ENCODE measurements at regions of chr10 and their contacts with region 1.

Region 1: GRCh38 chr10:72337020-72337629 is 17.6 kb downstream of the DNAJB12 start:
- DNase-seq: peak; percentile 49 to 63
- ATAC-seq: peak; percentile 56 to 75; a peak in 5 of 6 replicates
- H3K4me3 ChIP-seq: no peak overlapping the region
- H3K27ac ChIP-seq: peak overlapping the region; percentile 78 to 80
- H3K4me1 ChIP-seq: peaks cover 48% of the 10 kb centered on the region
- CTCF ChIP-seq: peak; percentile 96
- EP300 ChIP-seq: no peak
- POLR2A ChIP-seq: no peak
- RAD21 ChIP-seq: peak; percentile 94 to 95

Region 2: GRCh38 chr10:72133517-72133916 is 203.6 kb before region 1 on chr10:
- CTCF ChIA-PET with region 1: interaction called, 44 read pairs
- POLR2A ChIA-PET with region 1: no interaction called
- DNase-seq: no peak
- ATAC-seq: peak in 1 of 2 experiments; percentile 44; a peak in 3 of 6 replicates
- H3K4me3 ChIP-seq: no peak overlapping the region
- H3K27ac ChIP-seq: peak overlapping the region; percentile 10 to 56; a peak in 3 of 6 replicates
- H3K4me1 ChIP-seq: peaks cover 23% of the 10 kb centered on the region
- CTCF ChIP-seq: no peak
- EP300 ChIP-seq: no peak
- POLR2A ChIP-seq: no peak
- RAD21 ChIP-seq: no peak

Region 3: DNA sequence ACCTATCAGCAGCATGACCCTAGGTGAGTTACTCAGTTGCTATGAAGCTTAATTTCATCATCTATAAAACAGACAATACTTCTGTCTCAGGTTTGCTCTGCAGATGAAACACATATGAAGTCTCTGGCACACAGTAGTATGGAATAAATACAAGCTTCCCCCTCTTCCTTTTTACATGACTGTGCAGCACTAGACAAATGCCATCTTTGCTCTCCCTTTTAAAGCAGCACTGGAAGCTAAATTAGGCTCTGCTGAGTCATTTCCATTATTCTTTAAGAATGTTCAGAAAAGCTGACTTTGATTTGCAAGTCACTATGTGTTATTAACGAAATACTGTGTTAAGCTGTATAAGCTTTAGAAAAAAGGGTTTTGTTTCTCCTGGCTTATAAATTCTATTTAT is 162.0 kb before region 1 on chr10:
- CTCF ChIA-PET with region 1: no interaction called
- POLR2A ChIA-PET with region 1: no interaction called
- DNase-seq: peak in 1 of 2 experiments; percentile 25
- ATAC-seq: no peak
- H3K4me3 ChIP-seq: no peak overlapping the region
- H3K27ac ChIP-seq: peak overlapping the region; percentile 77 to 85
- H3K4me1 ChIP-seq: peaks cover 62% of the 10 kb centered on the region
- CTCF ChIP-seq: no peak
- EP300 ChIP-seq: no peak
- POLR2A ChIP-seq: no peak
- RAD21 ChIP-seq: no peak

Region 4: DNA sequence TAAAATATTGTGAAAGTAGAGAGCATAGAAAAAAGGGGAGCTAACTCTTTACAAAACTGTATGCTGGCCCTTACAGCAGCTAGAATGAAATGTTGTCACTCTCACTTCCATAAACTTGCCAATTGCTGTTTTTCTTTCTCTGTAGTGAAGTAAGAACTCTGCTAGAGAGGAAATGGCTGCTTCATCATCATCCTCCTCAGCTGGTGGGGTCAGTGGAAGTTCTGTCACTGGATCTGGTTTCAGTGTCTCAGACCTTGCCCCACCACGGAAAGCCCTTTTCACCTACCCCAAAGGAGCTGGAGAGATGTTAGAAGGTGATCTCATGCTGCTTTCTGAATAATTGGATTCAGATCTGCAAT is 113.4 kb before region 1 on chr10:
- CTCF ChIA-PET with region 1: interaction called, 10 read pairs
- POLR2A ChIA-PET with region 1: interaction called, 6 read pairs
- DNase-seq: no peak
- ATAC-seq: no peak
- H3K4me3 ChIP-seq: no peak overlapping the region
- H3K27ac ChIP-seq: peak overlapping the region; percentile 66 to 82
- H3K4me1 ChIP-seq: peaks cover 38% of the 10 kb centered on the region
- CTCF ChIP-seq: no peak
- EP300 ChIP-seq: no peak
- POLR2A ChIP-seq: no peak
- RAD21 ChIP-seq: no peak

Region 5: DNA sequence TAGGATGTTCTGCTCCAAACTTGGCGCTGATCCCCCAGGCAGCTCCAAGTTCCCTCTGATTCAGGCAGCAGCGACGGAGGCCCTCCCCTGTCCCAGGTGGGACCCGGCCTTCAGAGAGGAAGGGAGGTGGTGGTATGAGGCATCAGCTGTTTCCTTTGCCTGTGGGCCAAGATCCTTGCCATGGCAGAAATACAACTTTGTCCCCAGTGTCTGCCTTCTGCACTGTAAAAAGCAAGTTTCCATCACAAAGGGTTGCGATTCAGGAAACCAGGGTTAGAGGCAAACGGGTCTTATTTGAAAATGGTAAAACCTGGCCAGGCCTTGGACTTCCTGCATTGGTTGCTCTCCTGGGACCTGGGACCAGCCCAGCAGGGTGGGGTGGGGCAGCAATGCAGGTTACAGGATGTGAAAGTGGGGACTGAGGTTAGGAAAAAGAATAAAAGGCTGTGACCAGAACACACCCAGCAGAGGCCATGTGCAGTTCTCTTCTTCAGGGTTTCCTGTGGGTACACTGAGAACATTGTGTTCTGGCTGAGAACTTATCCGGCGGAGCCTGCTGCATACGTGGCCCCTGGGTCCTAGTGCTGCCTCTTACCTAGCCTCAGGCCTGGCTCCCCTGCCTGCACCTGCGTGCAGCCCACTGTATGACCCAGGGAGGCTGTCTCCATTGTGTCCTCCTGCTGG is 88.5 kb before region 1 on chr10:
- CTCF ChIA-PET with region 1: interaction called, 13 read pairs
- POLR2A ChIA-PET with region 1: no interaction called
- DNase-seq: peak in 1 of 2 experiments; percentile 60
- ATAC-seq: peak; percentile 25 to 51; a peak in 4 of 6 replicates
- H3K4me3 ChIP-seq: peak overlapping the region; percentile 9; the same call in 2 of the 3 replicates
- H3K27ac ChIP-seq: peak overlapping the region; percentile 99 to 100
- H3K4me1 ChIP-seq: peaks cover 67% of the 10 kb centered on the region
- CTCF ChIP-seq: no peak
- EP300 ChIP-seq: no peak
- POLR2A ChIP-seq: peak; percentile 22; the same call in 1 of the 2 replicates
- RAD21 ChIP-seq: no peak; a peak in 1 of 5 replicates

Region 6: GRCh38 chr10:72260588-72261322 is 76.4 kb before region 1 on chr10:
- CTCF ChIA-PET with region 1: interaction called, 11 read pairs
- POLR2A ChIA-PET with region 1: no interaction called
- DNase-seq: peak; percentile 91 to 99
- ATAC-seq: peak; percentile 90 to 91
- H3K4me3 ChIP-seq: peak overlapping the region; percentile 41
- H3K27ac ChIP-seq: peak overlapping the region; percentile 99 to 100
- H3K4me1 ChIP-seq: peaks cover 83% of the 10 kb centered on the region
- CTCF ChIP-seq: no peak
- EP300 ChIP-seq: peak; percentile 95 to 97; a peak in 4 of 5 replicates
- POLR2A ChIP-seq: peak; percentile 32
- RAD21 ChIP-seq: peak; percentile 42 to 61

Region 7: GRCh38 chr10:72354478-72355213 is 17.5 kb after region 1 on chr10 and contains the start of gene DNAJB12:
- CTCF ChIA-PET with region 1: interaction called, 88 read pairs
- POLR2A ChIA-PET with region 1: no interaction called
- DNase-seq: peak; percentile 96 to 98
- ATAC-seq: peak; percentile 82 to 90
- H3K4me3 ChIP-seq: peak within 1 kb of the TSS; percentile 65
- H3K27ac ChIP-seq: peak within 1 kb of the TSS; percentile 85 to 97
- H3K4me1 ChIP-seq: peaks cover 12% of the 10 kb centered on the region; the same call in 2 of the 3 replicates
- CTCF ChIP-seq: no peak
- EP300 ChIP-seq: peak in 1 of 2 experiments; percentile 29; a peak in 1 of 5 replicates
- POLR2A ChIP-seq: peak; percentile 64
- RAD21 ChIP-seq: 0 out of 5 replicates have a peak, but pooled peaks of 1 of the 2 experiments have one; percentile 11
- polyA plus RNA-seq, gene DNAJB12: 21.5 and 24.4 TPM in 2 replicates

Measured in A549 (cell line).